ENCODE measurements at regions of chr11 and their contacts with region 1.

Region 1: DNA sequence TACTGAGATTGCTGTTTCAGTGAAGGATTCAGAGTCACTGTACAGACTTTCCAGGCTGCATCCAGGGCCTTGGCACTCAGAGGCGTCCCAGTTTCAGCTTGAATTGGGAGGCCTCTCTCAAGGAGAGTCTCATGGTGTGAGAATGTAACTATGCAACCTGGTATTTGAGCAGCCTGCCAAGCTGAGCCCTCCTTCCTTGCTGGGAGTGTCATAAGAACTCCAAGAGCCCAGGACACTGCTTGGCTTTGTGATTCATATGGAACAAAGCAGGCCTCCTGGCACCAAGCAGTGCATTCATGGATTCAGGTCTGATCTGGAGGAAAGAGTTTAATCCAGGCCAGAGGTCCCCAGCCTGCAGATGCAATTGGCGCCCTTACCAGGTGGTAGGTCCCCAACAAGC is 171.7 kb downstream of the DBX1 start:
- DNase-seq: peak; percentile 51
- H3K4me3 ChIP-seq: no peak overlapping the region
- H3K27ac ChIP-seq: no peak overlapping the region
- H3K4me1 ChIP-seq: no peaks in the 10 kb centered on the region
- H3K27me3 ChIP-seq: no peaks in the 10 kb centered on the region
- CTCF ChIP-seq: no peak
- POLR2A ChIP-seq: no peak

Region 2: GRCh38 chr11:19536131-19536530 is 452.5 kb before region 1 on chr11:
- intact Hi-C with region 1: no loop called
- DNase-seq: no peak
- H3K4me3 ChIP-seq: no peak overlapping the region
- H3K27ac ChIP-seq: no peak overlapping the region
- H3K4me1 ChIP-seq: no peaks in the 10 kb centered on the region
- H3K27me3 ChIP-seq: no peaks in the 10 kb centered on the region
- CTCF ChIP-seq: no peak
- POLR2A ChIP-seq: no peak

Region 3: GRCh38 chr11:20056109-20056949 is 67.7 kb after region 1 on chr11:
- intact Hi-C with region 1: loop called (anchors 10 kb)
- DNase-seq: peak; percentile 81
- H3K4me3 ChIP-seq: no peak overlapping the region
- H3K27ac ChIP-seq: peak overlapping the region; percentile 24 to 67
- H3K4me1 ChIP-seq: no peaks in the 10 kb centered on the region
- H3K27me3 ChIP-seq: no peaks in the 10 kb centered on the region
- CTCF ChIP-seq: no peak
- POLR2A ChIP-seq: no peak

Region 4: GRCh38 chr11:20080032-20080685 is 91.6 kb after region 1 on chr11:
- intact Hi-C with region 1: no loop called
- DNase-seq: no peak
- H3K4me3 ChIP-seq: no peak overlapping the region
- H3K27ac ChIP-seq: no peak overlapping the region
- H3K4me1 ChIP-seq: no peaks in the 10 kb centered on the region
- H3K27me3 ChIP-seq: peaks cover 4% of the 10 kb centered on the region
- CTCF ChIP-seq: no peak
- POLR2A ChIP-seq: no peak

Region 5: GRCh38 chr11:20261526-20261925 is 272.9 kb after region 1 on chr11:
- intact Hi-C with region 1: no loop called
- DNase-seq: no peak
- H3K4me3 ChIP-seq: no peak overlapping the region
- H3K27ac ChIP-seq: no peak overlapping the region
- H3K4me1 ChIP-seq: no peaks in the 10 kb centered on the region
- H3K27me3 ChIP-seq: no peaks in the 10 kb centered on the region
- CTCF ChIP-seq: no peak
- POLR2A ChIP-seq: no peak

Measured in prostate gland (tissue), 2 donors.